ENCODE measurements at regions of chr15 and their contacts with region 1.

Region 1: DNA sequence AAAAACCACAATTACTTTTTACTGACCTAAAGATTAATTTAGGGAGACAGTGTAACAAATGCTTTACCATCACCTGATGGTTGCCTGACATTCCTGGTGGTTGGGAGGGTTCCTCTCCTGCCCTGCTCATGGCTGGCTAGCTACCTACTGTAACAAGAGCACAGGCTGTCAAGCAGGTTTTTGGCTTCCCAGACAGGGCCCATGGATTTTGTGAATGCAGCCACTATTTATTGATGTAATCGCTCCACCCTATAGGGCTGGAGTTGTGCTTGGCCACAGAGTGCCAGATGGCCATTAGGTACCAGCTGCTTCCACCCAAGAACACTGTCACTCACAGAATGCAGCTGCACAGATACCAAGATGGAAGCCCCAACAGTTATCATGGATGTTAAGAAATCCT is 31.0 kb upstream of the KLHL25 start:
- DNase-seq: no peak
- H3K4me3 ChIP-seq: no peak overlapping the region
- H3K27ac ChIP-seq: no peak overlapping the region
- H3K4me1 ChIP-seq: no peaks in the 10 kb centered on the region
- H3K27me3 ChIP-seq: no peaks in the 10 kb centered on the region
- CTCF ChIP-seq: no peak

Region 2: DNA sequence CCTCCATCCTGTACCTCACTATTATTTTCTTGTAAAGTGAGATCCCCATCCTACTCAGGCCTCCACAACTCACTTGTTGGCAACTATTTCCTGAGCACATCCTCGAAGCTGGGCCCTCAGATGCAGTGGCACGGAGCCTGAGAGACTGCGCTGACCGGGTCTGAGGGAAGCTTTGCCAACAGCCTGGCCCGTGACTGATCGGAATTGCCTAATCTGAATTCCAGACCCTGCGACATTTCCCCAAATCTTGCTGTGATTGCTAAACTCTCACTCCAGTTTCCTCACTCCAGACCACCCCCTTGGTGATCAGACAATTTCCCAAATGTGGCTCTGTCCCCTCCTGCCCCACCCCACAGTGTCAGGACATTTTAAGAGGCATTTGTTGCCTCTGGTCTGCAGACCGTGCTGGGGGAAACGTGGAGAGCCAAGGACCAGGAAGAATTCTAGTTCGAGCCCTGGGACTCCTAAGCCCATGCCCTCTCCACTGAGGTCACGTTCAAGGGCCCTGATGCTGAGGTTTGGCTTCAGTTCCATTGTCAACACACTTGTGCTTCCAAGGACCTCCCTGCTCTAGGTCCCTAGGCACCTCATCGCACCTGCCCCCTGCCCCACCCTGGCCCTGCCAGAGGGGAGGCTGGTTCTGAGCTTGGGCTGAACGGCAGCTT is 53.8 kb before region 1 on chr15:
- CTCF ChIA-PET with region 1: no interaction called
- dilution Hi-C with region 1: loop called (anchors 5 kb)
- in situ Hi-C with region 1: no loop called
- intact Hi-C with region 1: no loop called
- DNase-seq: no peak
- H3K4me3 ChIP-seq: no peak overlapping the region
- H3K27ac ChIP-seq: peak overlapping the region; percentile 42
- H3K4me1 ChIP-seq: peaks cover 28% of the 10 kb centered on the region
- H3K27me3 ChIP-seq: no peaks in the 10 kb centered on the region
- CTCF ChIP-seq: no peak

Region 3: GRCh38 chr15:85800467-85801123 is 25.1 kb before region 1 on chr15:
- CTCF ChIA-PET with region 1: no interaction called
- dilution Hi-C with region 1: no loop called
- in situ Hi-C with region 1: no loop called
- intact Hi-C with region 1: no loop called
- DNase-seq: peak; percentile 74
- H3K4me3 ChIP-seq: no peak overlapping the region
- H3K27ac ChIP-seq: no peak overlapping the region
- H3K4me1 ChIP-seq: peaks cover 6% of the 10 kb centered on the region
- H3K27me3 ChIP-seq: no peaks in the 10 kb centered on the region
- CTCF ChIP-seq: peak; percentile 26 to 68

Region 4: DNA sequence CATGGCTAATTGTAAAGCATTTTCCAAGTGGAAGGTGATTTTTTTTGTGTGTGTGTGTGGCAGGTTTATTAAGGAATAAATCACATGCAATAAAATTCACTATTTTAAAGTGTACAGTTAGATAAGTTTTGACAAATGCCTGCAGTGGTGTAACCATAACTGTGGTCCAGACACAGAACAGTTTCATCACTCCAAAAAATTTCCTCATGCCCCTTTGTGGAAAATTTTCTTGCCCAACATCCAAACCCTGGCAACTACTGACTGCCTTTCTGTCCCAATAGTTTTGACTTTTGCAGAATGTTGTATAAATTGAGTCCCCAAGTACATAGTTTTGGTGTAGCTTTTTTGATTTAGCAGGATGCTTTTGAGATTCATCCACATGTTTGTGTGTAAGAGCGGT is 104.1 kb after region 1 on chr15:
- CTCF ChIA-PET with region 1: no interaction called
- dilution Hi-C with region 1: loop called (anchors 5 kb)
- in situ Hi-C with region 1: no loop called
- intact Hi-C with region 1: no loop called
- DNase-seq: no peak
- H3K4me3 ChIP-seq: no peak overlapping the region
- H3K27ac ChIP-seq: no peak overlapping the region
- H3K4me1 ChIP-seq: no peaks in the 10 kb centered on the region
- H3K27me3 ChIP-seq: no peaks in the 10 kb centered on the region
- CTCF ChIP-seq: no peak

Measured in mammary epithelial cell (primary cell).